PC-9 (cell line): ENCODE measurements at regions of chr11 and their contacts with region 1.

Region 1: GRCh38 chr11:75022759-75023396 is 34.1 kb downstream of the NEU3 start:
- DNase-seq: peak; percentile 69 to 87
- H3K4me3 ChIP-seq: no peak overlapping the region
- H3K27ac ChIP-seq: no peak overlapping the region
- H3K4me1 ChIP-seq: no peaks in the 10 kb centered on the region
- H3K27me3 ChIP-seq: peaks cover 33% of the 10 kb centered on the region; the same call in 1 of the 2 replicates
- CTCF ChIP-seq: peak; percentile 98

Region 2: GRCh38 chr11:74570266-74571061 is 452.4 kb before region 1 on chr11:
- CTCF ChIA-PET with region 1: interaction called, 12 read pairs
- POLR2A ChIA-PET with region 1: no interaction called
- intact Hi-C with region 1: no loop called
- DNase-seq: peak; percentile 59 to 60
- H3K4me3 ChIP-seq: no peak overlapping the region
- H3K27ac ChIP-seq: no peak overlapping the region
- H3K4me1 ChIP-seq: no peaks in the 10 kb centered on the region
- H3K27me3 ChIP-seq: no peaks in the 10 kb centered on the region
- CTCF ChIP-seq: peak; percentile 95

Region 3: GRCh38 chr11:74929431-74930363 is 93.2 kb before region 1 on chr11:
- CTCF ChIA-PET with region 1: interaction called, 6 read pairs
- POLR2A ChIA-PET with region 1: no interaction called
- intact Hi-C with region 1: loop called (anchors 5 kb)
- DNase-seq: peak; percentile 55 to 72
- H3K4me3 ChIP-seq: no peak overlapping the region
- H3K27ac ChIP-seq: no peak overlapping the region
- H3K4me1 ChIP-seq: no peaks in the 10 kb centered on the region
- H3K27me3 ChIP-seq: no peaks in the 10 kb centered on the region
- CTCF ChIP-seq: peak; percentile 97

Region 4: GRCh38 chr11:75118577-75118976 is 95.7 kb after region 1 on chr11:
- CTCF ChIA-PET with region 1: no interaction called
- POLR2A ChIA-PET with region 1: no interaction called
- intact Hi-C with region 1: no loop called
- DNase-seq: no peak
- H3K4me3 ChIP-seq: no peak overlapping the region
- H3K27ac ChIP-seq: no peak overlapping the region
- H3K4me1 ChIP-seq: no peaks in the 10 kb centered on the region
- H3K27me3 ChIP-seq: peaks cover 50% of the 10 kb centered on the region
- CTCF ChIP-seq: no peak

Region 5: DNA sequence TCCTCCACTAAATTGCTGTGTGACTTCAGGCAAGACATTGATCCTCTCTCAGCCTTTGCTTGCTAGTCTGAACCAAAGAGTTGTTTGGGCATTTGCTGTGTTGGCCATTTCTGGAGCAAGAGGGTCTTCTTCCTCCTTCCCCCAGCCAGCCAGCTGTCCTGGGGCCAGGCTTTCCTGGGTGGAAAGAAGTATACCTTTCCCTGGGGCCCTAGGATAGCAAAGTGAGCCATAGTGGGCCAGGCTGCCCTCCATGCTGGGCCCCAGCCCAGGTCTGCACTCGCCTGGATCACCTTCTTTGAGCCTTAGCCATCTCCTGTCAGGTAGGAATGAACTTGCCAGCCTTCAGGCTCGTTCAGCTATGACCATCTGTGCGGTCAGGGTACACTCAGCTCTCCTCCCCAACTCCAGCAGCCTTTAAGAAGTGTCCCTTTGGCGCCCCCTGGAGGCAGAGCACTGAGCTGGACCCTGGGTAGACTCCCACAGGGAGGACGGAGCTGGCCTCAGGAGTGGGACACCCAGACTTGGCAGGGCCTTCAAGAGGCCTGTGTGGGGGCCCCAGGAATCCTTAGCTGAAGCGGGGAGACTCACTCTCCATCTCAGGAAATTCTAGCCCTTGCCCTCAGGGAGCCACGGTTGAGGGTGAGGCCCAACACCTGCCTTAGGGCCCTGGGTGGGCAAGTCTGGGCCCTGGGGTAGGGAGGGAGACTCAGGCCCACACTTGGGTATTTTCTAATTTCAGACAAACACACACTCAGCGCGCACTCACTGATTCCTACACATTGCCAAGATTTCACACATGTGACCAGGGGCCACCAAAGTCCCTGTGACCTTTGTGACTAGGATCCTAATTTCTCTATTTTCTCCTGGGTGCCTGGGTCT is 182.0 kb after region 1 on chr11:
- CTCF ChIA-PET with region 1: interaction called, 35 read pairs
- POLR2A ChIA-PET with region 1: no interaction called
- intact Hi-C with region 1: loop called (anchors 1 kb)
- DNase-seq: peak; percentile 60 to 80
- H3K4me3 ChIP-seq: no peak overlapping the region
- H3K27ac ChIP-seq: no peak overlapping the region
- H3K4me1 ChIP-seq: no peaks in the 10 kb centered on the region
- H3K27me3 ChIP-seq: peaks cover 75% of the 10 kb centered on the region
- CTCF ChIP-seq: peak; percentile 95

Region 6: GRCh38 chr11:75241036-75241905 is 218.4 kb after region 1 on chr11:
- CTCF ChIA-PET with region 1: interaction called, 3 read pairs
- POLR2A ChIA-PET with region 1: no interaction called
- intact Hi-C with region 1: loop called (anchors 2 kb)
- DNase-seq: peak in 1 of 2 experiments; percentile 93
- H3K4me3 ChIP-seq: no peak overlapping the region
- H3K27ac ChIP-seq: no peak overlapping the region
- H3K4me1 ChIP-seq: no peaks in the 10 kb centered on the region
- H3K27me3 ChIP-seq: peaks cover 56% of the 10 kb centered on the region
- CTCF ChIP-seq: no peak

Region 7: GRCh38 chr11:75248690-75249268 is 225.9 kb after region 1 on chr11:
- CTCF ChIA-PET with region 1: interaction called, 17 read pairs
- POLR2A ChIA-PET with region 1: no interaction called
- intact Hi-C with region 1: loop called (anchors 1 kb)
- DNase-seq: peak; percentile 79 to 84
- H3K4me3 ChIP-seq: no peak overlapping the region
- H3K27ac ChIP-seq: no peak overlapping the region
- H3K4me1 ChIP-seq: no peaks in the 10 kb centered on the region
- H3K27me3 ChIP-seq: peaks cover 50% of the 10 kb centered on the region
- CTCF ChIP-seq: peak; percentile 99

Region 8: DNA sequence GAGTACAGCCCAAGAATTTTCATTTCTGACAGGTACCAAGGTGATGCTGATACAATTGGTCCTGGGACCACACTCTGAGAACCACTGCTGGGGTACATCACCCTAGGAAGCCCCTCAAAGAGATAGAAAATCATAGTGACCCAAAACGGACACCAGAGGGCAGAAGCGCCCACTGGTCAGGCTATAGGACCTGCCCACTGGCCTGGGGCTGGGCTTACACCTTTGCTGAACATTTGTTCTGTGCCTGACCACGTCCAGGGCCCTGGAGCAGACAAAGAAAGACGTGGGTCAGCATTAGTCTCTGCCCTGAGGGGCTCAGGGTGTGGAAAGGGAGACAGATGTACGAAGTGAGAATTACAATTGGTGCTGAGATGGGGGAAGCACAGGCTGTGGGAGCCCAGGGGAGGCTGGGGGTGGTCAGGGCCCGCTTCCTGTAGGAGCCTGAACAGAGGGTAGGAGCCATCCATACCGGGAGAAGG is 524.7 kb after region 1 on chr11:
- CTCF ChIA-PET with region 1: interaction called, 10 read pairs
- POLR2A ChIA-PET with region 1: no interaction called
- intact Hi-C with region 1: no loop called
- DNase-seq: peak; percentile 61 to 72
- H3K4me3 ChIP-seq: no peak overlapping the region
- H3K27ac ChIP-seq: no peak overlapping the region
- H3K4me1 ChIP-seq: no peaks in the 10 kb centered on the region
- H3K27me3 ChIP-seq: no peaks in the 10 kb centered on the region
- CTCF ChIP-seq: peak; percentile 98